Breast epithelium (tissue), 4 donors: ENCODE measurements at regions of chr22 and their contacts with region 1.

Region 1: DNA sequence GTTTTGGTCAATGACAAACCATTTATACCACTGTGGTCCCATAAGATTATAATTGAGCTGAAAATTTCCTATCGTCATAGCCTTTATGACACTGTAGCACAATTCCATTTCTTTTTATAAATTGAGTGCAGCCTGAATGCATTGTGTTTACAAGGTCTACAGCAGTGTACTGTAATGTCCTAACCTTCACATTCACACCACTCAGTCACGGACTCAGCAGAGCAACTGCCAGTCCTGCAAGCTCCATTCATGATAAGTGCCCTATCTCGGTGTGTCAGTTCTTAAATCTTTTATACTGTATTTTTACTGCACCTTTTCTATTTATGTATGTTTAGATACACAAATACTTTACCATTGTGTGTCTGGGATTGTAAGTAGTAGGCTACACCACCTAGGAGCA is 55.2 kb upstream of the SLC25A18 start:
- DNase-seq: no peak
- H3K4me3 ChIP-seq: no peak overlapping the region
- H3K27ac ChIP-seq: no peak overlapping the region
- H3K4me1 ChIP-seq: no peaks in the 10 kb centered on the region
- H3K27me3 ChIP-seq: no peaks in the 10 kb centered on the region
- CTCF ChIP-seq: no peak
- POLR2A ChIP-seq: no peak

Region 2: GRCh38 chr22:17064498-17065100 is 443.5 kb before region 1 on chr22:
- intact Hi-C with region 1: loop called (anchors 5 kb)
- DNase-seq: no peak
- H3K4me3 ChIP-seq: no peak overlapping the region
- H3K27ac ChIP-seq: peak overlapping the region; percentile 40 to 56
- H3K4me1 ChIP-seq: no peaks in the 10 kb centered on the region
- H3K27me3 ChIP-seq: no peaks in the 10 kb centered on the region
- CTCF ChIP-seq: no peak
- POLR2A ChIP-seq: no peak

Region 3: GRCh38 chr22:17492247-17492646 is 15.9 kb before region 1 on chr22:
- intact Hi-C with region 1: no loop called
- DNase-seq: no peak
- H3K4me3 ChIP-seq: no peak overlapping the region
- H3K27ac ChIP-seq: no peak overlapping the region
- H3K4me1 ChIP-seq: no peaks in the 10 kb centered on the region
- H3K27me3 ChIP-seq: no peaks in the 10 kb centered on the region
- CTCF ChIP-seq: no peak
- POLR2A ChIP-seq: no peak